ENCODE measurements at regions of chr17 and their contacts with region 1.

Region 1: DNA sequence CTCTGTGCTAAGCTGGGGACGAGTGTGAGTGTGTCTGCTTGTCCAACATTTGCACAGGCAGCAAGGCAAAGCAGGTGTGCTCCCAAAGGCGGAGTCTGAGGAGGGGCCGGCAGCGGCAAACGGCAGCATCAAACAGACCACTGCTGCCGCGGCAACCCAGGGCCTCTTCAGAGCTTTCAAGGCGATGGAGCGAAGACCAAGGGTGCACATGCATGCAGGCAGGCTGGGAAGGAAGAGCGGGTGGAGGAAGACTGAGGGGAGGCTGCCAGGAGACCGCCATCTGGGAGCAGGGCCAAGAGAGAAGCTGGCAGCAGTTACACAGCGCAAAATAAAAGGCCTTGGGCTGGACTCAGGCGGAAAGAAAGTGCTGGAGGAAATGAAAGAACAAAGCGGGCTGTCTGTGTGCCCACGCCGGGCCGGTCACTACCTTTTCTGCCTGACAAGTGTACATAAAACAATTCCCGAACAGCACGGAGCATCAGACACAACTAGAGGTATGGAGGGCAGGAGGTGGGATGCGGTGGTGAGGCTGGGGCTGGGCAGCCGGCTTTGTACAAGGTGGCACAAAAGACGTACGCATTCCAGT is 8.5 kb downstream of the TIMM22 start:
- DNase-seq: peak; percentile 53 to 84
- ATAC-seq: peak; percentile 21 to 61 (median 54)
- H3K4me3 ChIP-seq: peak overlapping the region; percentile 29
- H3K27ac ChIP-seq: peak overlapping the region; percentile 78
- H3K4me1 ChIP-seq: peaks cover 59% of the 10 kb centered on the region
- H3K27me3 ChIP-seq: no peaks in the 10 kb centered on the region
- CTCF ChIP-seq: no peak

Region 2: GRCh38 chr17:1025733-1026598 is 20.5 kb after region 1 on chr17:
- intact Hi-C with region 1: loop called in 1 of 2 experiments (anchors 1 kb)
- DNase-seq: peak in 1 of 2 donors; percentile 51
- ATAC-seq: no peak
- H3K4me3 ChIP-seq: no peak overlapping the region
- H3K27ac ChIP-seq: no peak overlapping the region
- H3K4me1 ChIP-seq: peaks cover 36% of the 10 kb centered on the region
- H3K27me3 ChIP-seq: peaks cover 0 to 4% (median 0%) of the 10 kb centered on the region in 3 donors
- CTCF ChIP-seq: no peak

Region 3: GRCh38 chr17:1039511-1040215 is 34.2 kb after region 1 on chr17:
- intact Hi-C with region 1: loop called in 1 of 2 experiments (anchors 5 kb)
- DNase-seq: peak; percentile 78 to 88
- ATAC-seq: peak; percentile 80 to 87 (median 86)
- H3K4me3 ChIP-seq: peak overlapping the region; percentile 58
- H3K27ac ChIP-seq: peak overlapping the region; percentile 78
- H3K4me1 ChIP-seq: peaks cover 12% of the 10 kb centered on the region
- H3K27me3 ChIP-seq: peaks cover 0 to 2% (median 0%) of the 10 kb centered on the region in 3 donors
- CTCF ChIP-seq: no peak

Region 4: DNA sequence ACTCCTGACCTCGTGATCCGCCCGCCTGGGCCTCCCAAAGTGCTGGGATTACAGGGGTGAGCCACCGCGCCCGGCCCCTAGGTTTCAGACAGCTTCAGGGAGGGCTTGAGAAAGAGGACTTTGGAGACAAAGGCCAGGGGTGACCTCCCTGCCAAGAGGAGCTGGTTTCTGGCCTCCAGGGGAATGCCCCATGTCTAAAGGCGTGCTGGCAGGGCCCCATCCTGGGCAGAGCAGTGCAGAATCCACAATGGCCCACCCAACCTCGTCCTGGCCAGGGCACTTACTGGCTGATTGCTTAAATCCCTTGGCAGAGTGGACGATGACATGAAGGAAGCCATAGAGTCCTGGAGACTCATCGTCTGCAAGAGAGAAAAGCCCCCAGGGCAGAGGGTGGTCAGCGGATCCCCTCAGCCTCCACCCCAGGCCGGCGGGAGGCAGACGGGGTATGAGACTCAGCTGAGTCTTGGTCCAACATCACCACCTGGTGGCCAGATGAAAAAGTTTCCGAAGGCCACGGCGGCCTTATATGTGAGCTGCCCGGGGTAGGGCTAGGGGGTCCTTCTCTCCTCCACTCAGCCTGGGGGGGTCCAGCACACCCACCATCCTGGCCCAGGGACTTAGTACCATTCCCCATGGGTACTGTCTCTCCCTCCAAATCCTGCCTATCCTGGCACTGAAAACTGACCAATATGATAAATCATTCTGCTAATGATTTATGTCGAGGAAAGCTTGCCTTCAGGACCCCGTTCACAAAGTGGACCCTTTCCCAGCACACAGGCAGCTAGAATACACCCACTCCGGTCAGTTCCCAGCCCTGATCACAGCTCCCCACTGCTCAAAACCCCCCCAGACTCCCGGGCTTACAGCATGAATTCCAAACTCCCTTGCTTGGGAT is 50.5 kb after region 1 on chr17:
- intact Hi-C with region 1: loop called (anchors 2 to 10 kb)
- DNase-seq: peak; percentile 65 to 83
- ATAC-seq: peak; percentile 67 to 88 (median 80)
- H3K4me3 ChIP-seq: no peak overlapping the region
- H3K27ac ChIP-seq: peak overlapping the region; percentile 41
- H3K4me1 ChIP-seq: peaks cover 5% of the 10 kb centered on the region
- H3K27me3 ChIP-seq: no peaks in the 10 kb centered on the region
- CTCF ChIP-seq: peak; percentile 82